Esophagus squamous epithelium (tissue), 5 donors: ENCODE measurements at regions of chr19 and their contacts with region 1.

Region 1: GRCh38 chr19:4811328-4812131 is 20.0 kb downstream of the TICAM1 start:
- DNase-seq: no peak
- H3K4me3 ChIP-seq: no peak overlapping the region
- H3K27ac ChIP-seq: peak overlapping the region; percentile 52 to 93 (median 93)
- H3K4me1 ChIP-seq: peaks cover 19 to 54% (median 22%) of the 10 kb centered on the region in 3 donors
- H3K27me3 ChIP-seq: no peaks in the 10 kb centered on the region
- CTCF ChIP-seq: peak; percentile 80 to 92 (median 88)
- POLR2A ChIP-seq: no peak

Region 2: DNA sequence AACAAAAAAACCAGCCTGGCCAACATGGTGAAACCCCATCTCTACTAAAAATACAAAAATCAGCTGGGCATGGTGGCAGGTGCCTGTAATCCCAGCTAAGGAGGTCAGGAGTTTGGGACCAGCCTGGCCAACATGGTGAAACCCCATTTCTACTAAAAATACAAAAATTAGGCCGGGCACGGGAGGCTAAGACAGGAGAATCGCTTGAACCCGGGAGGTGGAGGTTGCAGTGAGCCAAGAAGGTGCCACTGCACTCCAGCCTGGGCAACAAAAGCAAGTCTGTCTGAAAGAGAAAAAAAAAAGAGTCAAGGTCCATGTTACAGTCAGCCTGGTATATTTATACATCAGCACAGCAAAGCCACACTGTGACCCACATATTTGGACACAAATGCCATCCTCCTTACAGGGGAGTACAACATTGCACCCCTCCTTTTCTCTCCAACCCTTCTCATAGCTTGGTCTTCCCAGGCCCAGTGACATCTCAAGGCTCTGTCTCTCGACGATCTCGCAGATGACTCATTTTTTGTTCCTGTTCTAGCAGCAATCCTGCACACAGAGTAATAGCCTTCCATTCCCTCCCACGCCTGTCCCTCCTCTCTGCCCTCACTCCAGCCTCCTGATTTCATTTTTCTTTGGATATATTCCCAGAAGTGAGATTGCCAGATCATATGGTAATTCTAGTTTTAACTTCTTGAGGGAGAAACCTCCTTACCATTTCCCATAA is 66.9 kb before region 1 on chr19:
- intact Hi-C with region 1: no loop called
- DNase-seq: no peak
- H3K4me3 ChIP-seq: no peak overlapping the region
- H3K27ac ChIP-seq: peak overlapping the region in 1 of 4 donors; percentile 44
- H3K4me1 ChIP-seq: peaks cover 0 to 23% (median 5%) of the 10 kb centered on the region in 3 donors
- H3K27me3 ChIP-seq: peaks cover 0 to 30% (median 2%) of the 10 kb centered on the region in 4 donors
- CTCF ChIP-seq: no peak
- POLR2A ChIP-seq: no peak

Region 3: GRCh38 chr19:4916292-4917082 is 105.0 kb after region 1 on chr19:
- intact Hi-C with region 1: loop called (anchors 5 kb)
- DNase-seq: no peak
- H3K4me3 ChIP-seq: peak overlapping the region in 3 of 4 donors; percentile 28 to 53 (median 37)
- H3K27ac ChIP-seq: peak overlapping the region; percentile 54 to 85 (median 66)
- H3K4me1 ChIP-seq: peaks cover 14 to 50% (median 20%) of the 10 kb centered on the region in 3 donors
- H3K27me3 ChIP-seq: no peaks in the 10 kb centered on the region
- CTCF ChIP-seq: no peak
- POLR2A ChIP-seq: peak in 1 of 4 donors; percentile 42

Region 4: DNA sequence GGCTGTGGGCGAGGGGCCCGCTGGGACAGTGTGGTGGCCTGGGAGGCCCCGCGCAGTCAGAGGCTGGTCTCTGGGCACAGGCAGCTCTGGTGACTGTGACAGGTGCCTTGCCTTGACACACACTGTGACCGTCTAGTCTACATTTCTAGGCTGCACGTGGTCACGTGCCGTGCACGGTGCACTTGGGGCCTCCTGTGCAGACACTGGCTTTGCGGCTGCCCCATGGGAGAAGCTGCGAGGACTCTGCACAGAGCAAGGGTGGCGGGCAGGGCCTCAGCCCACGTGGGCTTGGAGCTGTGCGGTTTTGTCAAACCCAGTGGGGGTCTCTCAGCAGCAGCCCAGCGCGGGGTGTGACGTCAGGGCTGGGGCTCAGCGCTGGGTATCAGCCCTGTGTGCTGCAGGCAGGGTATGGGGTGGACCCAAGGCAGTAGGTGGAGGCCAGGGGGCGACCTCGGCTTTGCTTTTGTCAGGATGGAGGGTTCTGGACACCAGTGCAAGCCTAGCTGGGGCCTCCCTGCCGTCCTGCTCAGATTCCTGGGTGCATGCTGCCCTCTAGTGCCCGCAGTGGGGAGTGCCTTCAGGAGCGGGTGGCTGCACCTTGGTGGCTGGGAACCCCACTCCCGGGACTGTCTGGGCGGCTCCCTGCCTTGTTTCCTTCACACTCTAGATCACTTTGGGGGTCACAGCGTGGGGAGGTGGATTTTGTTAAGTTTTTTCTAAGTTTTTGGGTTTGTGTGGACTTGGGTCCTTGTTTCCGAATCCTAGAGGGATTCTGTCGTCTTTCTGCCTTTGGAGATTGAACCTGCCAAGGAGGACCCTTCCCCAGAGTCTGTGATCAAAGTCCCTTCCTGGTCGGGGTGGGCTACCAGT is 219.9 kb after region 1 on chr19:
- intact Hi-C with region 1: loop called (anchors 5 kb)
- DNase-seq: peak; percentile 19
- H3K4me3 ChIP-seq: no peak overlapping the region
- H3K27ac ChIP-seq: no peak overlapping the region
- H3K4me1 ChIP-seq: peaks cover 7 to 34% (median 12%) of the 10 kb centered on the region in 3 donors
- H3K27me3 ChIP-seq: no peaks in the 10 kb centered on the region
- CTCF ChIP-seq: peak; percentile 85 to 96 (median 94)
- POLR2A ChIP-seq: no peak